Left ventricle myocardium superior (tissue), 1 donor: ENCODE measurements at regions of chr9 and their contacts with region 1.

Region 1: GRCh38 chr9:6353851-6354686 is 25.9 kb downstream of the TPD52L3 start:
- DNase-seq: no peak
- ATAC-seq: peak; percentile 71

Region 2: DNA sequence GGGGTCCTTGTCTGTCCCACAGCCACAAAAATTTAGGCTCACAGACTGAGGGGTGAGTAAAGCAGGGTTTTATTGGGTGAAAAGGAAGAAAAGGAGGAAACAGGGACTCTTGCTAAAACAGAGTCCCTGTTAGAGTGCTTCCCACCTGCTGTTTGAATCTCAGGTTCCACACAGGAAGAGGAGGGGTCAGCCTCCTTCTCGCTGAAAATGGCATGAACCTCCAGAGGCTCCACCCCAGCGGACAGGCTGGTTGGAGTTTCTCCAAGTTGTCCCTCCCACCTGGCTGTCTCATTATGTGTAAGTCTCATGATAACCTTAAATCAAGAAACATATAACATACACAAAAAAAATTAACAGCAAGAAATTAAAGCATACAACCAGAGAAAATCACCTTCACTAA is 30.7 kb after region 1 on chr9:
- intact Hi-C with region 1: no loop called
- DNase-seq: no peak
- ATAC-seq: no peak

Region 3: DNA sequence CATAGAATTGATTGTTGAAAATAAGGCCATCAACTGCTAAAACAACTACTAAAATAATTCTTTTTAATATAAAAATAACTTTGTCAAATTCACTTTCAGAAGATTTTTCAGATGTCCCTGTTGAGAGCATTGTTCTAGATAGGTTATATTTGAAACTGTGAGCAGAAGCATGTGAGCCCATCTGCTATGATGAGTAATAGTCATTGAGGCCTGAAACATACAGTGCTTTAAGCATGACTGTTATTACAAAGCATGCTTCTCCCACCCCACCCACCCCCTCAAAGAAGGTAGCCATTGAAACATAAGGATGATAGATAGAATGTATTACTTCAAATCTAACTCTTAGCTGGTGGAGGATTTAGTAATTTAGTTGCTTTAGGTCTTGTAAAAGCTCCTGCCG is 144.9 kb after region 1 on chr9:
- intact Hi-C with region 1: loop called (anchors 10 kb)
- DNase-seq: no peak
- ATAC-seq: no peak

Region 4: DNA sequence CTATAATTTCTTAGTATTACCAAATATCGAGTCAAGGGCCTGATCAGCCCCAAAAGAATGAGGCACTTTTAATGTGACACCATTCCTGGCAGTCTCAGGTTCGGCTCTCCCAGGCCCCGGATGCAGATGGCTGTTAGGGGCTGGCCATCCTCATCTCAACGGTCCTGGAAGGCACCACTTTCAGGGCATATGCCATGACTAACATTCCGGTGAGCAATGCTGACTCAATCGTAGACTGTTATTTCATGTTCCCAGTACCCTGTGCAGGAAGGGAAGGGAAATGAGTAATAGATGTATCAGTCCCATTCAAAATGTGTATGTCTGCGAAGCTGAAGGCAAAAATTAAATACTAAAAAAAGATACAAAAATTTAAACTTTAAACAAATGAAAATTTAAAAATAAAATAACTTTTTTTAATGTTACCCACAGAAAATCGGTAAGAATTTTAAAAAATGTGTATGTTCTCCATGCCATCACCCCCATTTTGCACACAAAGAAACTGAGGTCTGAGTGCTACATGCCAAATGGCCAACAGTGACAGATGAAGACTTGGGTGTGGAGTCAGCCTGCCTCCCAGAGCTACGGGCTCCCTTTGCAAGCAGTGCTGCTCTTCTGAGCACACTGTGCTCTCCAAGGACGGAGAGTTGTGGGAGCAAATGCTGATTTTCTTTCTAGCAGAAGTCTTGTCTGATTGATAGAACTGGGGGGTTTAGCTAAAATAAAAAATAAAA is 212.5 kb after region 1 on chr9:
- intact Hi-C with region 1: loop called (anchors 5 kb)
- DNase-seq: no peak
- ATAC-seq: no peak

Region 5: GRCh38 chr9:6667633-6668280 is 313.7 kb after region 1 on chr9:
- intact Hi-C with region 1: loop called (anchors 10 kb)
- DNase-seq: no peak
- ATAC-seq: no peak